ENCODE measurements at regions of chr10 and their contacts with region 1.

Region 1: DNA sequence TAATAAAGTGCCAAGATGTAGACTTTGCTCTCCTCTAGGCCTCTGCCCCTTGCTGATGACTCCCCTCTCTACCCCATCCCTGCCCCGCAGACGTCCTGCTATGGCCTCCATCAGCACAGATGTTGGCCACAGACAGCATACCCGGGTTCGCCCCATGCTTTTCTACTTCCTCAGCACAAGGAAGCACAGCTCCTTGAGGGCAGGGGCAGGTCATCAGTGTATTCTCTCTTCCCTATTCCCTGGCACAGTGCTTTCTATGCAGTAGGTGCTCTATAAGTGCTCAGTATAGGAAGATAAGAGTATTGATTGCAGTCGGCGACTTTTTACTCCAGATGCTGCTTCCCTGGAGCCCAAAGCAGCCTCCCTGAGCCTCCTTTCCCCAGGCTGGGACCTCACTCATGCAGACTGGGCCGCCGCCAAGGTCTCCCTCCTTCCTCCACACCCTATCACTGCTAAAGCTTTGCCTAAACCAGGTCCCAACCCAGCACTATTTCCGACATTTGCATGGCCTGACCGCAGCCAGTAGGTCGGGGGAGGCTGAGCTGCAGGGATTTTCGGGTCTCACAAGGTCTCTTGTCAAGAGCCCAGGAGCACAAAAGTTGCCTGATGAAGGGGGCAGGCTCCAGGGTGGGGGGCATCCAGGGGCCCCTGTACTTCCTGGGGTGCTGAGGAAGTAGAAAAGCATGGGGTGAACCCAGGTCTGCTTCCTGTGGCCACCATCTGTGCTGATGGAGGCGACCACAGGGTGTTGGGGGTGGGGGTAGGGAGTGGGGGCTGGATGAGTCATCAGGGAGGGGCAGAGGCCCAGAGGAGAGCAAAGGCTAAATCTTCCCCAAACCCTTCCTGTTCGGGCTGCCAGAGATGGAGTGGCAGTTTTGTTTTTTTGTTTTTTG is 8.0 kb downstream of the CALHM3 start:
- DNase-seq: peak; percentile 97
- ATAC-seq: peak; percentile 88
- H3K4me3 Mint-ChIP-seq: peak overlapping the region; percentile 68
- H3K27ac Mint-ChIP-seq: peak overlapping the region; percentile 97
- H3K4me1 Mint-ChIP-seq: peaks cover 65% of the 10 kb centered on the region
- H3K27me3 Mint-ChIP-seq: no peaks in the 10 kb centered on the region

Region 2: GRCh38 chr10:103451831-103452505 is 19.0 kb before region 1 on chr10 and contains the start of gene CALHM2:
- CTCF ChIA-PET with region 1: interaction called, 54 read pairs
- DNase-seq: peak; percentile 74
- ATAC-seq: peak; percentile 83
- H3K4me3 Mint-ChIP-seq: peak within 1 kb of the TSS; percentile 82
- H3K27ac Mint-ChIP-seq: peak within 1 kb of the TSS; percentile 89
- H3K4me1 Mint-ChIP-seq: peaks cover 56% of the 10 kb centered on the region
- H3K27me3 Mint-ChIP-seq: no peaks in the 10 kb centered on the region
- total RNA-seq, gene CALHM2: 65.6 to 93.4 TPM

Region 3: GRCh38 chr10:103578782-103579382 is 107.9 kb after region 1 on chr10:
- CTCF ChIA-PET with region 1: no interaction called
- DNase-seq: no peak
- ATAC-seq: no peak
- H3K4me3 Mint-ChIP-seq: no peak overlapping the region
- H3K27ac Mint-ChIP-seq: no peak overlapping the region
- H3K4me1 Mint-ChIP-seq: peaks cover 12% of the 10 kb centered on the region
- H3K27me3 Mint-ChIP-seq: peaks cover 5% of the 10 kb centered on the region

Region 4: DNA sequence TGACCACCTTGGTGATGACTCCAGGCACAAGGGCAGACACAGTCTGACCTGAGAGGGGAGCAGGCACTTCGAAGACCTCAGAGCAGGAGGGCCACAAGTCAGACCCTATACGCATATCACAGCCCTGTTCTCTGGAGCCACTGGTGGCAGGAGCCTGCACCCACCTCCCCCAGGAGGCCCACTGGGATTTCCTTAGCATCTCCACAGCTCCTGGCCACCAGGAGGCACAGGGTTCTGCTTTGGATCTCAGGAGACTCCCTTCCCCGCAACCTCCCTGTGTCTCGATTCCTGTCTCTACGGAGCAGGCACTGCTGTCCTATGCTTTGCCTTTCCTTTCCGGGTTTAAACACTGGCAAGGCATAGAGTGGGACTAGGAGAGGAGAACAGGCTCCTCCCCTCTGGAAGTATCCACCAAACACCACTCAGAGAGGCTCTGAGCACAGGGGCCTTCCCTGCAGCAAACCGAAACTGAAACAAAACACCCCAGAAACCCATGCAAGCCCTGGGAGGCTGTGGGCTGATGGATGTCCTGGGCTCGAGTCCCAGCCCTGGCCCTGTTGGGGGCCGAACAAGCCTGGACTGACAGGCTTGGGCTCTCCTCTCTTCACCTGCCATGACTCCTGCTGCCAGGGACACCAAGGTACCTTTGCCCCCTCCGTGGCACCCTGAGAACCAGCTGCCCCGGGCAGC is 188.8 kb after region 1 on chr10:
- CTCF ChIA-PET with region 1: no interaction called
- DNase-seq: peak; percentile 80
- ATAC-seq: peak; percentile 90
- H3K4me3 Mint-ChIP-seq: peak overlapping the region; percentile 88
- H3K27ac Mint-ChIP-seq: peak overlapping the region; percentile 89
- H3K4me1 Mint-ChIP-seq: peaks cover 14% of the 10 kb centered on the region
- H3K27me3 Mint-ChIP-seq: no peaks in the 10 kb centered on the region

Measured in activated CD8-positive, alpha-beta memory T cell treated with anti-CD3 and anti-CD28 coated beads, Interleukin-2, amount 10 ng/mL, durations not matched to agents 7 days and 5 days (primary cell).